PC-9 (cell line): ENCODE measurements at regions of chr10 and their contacts with region 1.

Region 1: GRCh38 chr10:79266543-79267312 is 80.5 kb upstream of the PPIF start:
- DNase-seq: peak in 1 of 2 experiments; percentile 62
- H3K4me3 ChIP-seq: no peak overlapping the region
- H3K27ac ChIP-seq: no peak overlapping the region
- H3K4me1 ChIP-seq: peaks cover 41% of the 10 kb centered on the region
- H3K27me3 ChIP-seq: no peaks in the 10 kb centered on the region
- CTCF ChIP-seq: no peak

Region 2: GRCh38 chr10:77582710-77583115 is 1684.0 kb before region 1 on chr10:
- CTCF ChIA-PET with region 1: no interaction called
- POLR2A ChIA-PET with region 1: interaction called, 12 read pairs
- intact Hi-C with region 1: no loop called
- DNase-seq: peak; percentile 91 to 96
- H3K4me3 ChIP-seq: no peak overlapping the region
- H3K27ac ChIP-seq: peak overlapping the region; percentile 88
- H3K4me1 ChIP-seq: peaks cover 63% of the 10 kb centered on the region
- H3K27me3 ChIP-seq: no peaks in the 10 kb centered on the region
- CTCF ChIP-seq: no peak

Region 3: GRCh38 chr10:79202188-79203013 is 64.3 kb before region 1 on chr10:
- CTCF ChIA-PET with region 1: interaction called, 16 read pairs
- POLR2A ChIA-PET with region 1: no interaction called
- intact Hi-C with region 1: no loop called
- DNase-seq: peak in 1 of 2 experiments; percentile 51
- H3K4me3 ChIP-seq: no peak overlapping the region
- H3K27ac ChIP-seq: no peak overlapping the region
- H3K4me1 ChIP-seq: no peaks in the 10 kb centered on the region
- H3K27me3 ChIP-seq: no peaks in the 10 kb centered on the region
- CTCF ChIP-seq: peak; percentile 70

Region 4: DNA sequence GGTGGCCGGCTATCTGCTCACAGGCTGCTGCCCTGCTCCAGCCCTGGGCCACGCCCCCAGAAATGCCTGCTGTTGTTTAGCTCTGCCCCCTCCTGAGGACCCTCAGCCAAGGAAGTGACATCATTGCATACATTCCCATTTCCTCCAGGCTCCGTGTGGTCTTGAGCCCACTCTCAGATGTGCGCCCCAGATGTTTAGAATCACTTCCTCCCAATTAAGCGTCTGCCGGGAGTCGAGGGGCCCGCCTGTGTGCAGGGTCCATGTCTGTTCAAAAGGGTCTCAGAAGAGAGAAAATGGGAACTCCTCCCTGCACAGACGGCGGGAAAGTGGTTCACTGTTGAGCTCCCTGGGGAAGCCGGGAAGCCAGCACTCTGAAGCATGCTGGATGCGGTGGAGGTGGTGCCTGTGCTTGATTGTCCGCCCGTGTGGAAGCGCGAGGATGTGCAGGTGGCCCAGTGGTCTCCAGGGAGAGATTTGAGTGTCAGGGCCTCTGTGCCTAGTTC is 36.3 kb before region 1 on chr10:
- CTCF ChIA-PET with region 1: no interaction called
- POLR2A ChIA-PET with region 1: no interaction called
- intact Hi-C with region 1: loop called (anchors 5 kb)
- DNase-seq: no peak
- H3K4me3 ChIP-seq: no peak overlapping the region
- H3K27ac ChIP-seq: no peak overlapping the region
- H3K4me1 ChIP-seq: 0 out of 2 replicates have a peak, but pooled peaks cover 9% of the 10 kb centered on the region
- H3K27me3 ChIP-seq: no peaks in the 10 kb centered on the region
- CTCF ChIP-seq: no peak

Region 5: GRCh38 chr10:79242620-79243152 is 24.0 kb before region 1 on chr10:
- CTCF ChIA-PET with region 1: interaction called, 3 read pairs
- POLR2A ChIA-PET with region 1: interaction called, 4 read pairs
- intact Hi-C with region 1: loop called (anchors 2 kb)
- DNase-seq: peak; percentile 62 to 72
- H3K4me3 ChIP-seq: peak overlapping the region; percentile 66
- H3K27ac ChIP-seq: no peak overlapping the region
- H3K4me1 ChIP-seq: peaks cover 32% of the 10 kb centered on the region
- H3K27me3 ChIP-seq: no peaks in the 10 kb centered on the region
- CTCF ChIP-seq: no peak

Region 6: DNA sequence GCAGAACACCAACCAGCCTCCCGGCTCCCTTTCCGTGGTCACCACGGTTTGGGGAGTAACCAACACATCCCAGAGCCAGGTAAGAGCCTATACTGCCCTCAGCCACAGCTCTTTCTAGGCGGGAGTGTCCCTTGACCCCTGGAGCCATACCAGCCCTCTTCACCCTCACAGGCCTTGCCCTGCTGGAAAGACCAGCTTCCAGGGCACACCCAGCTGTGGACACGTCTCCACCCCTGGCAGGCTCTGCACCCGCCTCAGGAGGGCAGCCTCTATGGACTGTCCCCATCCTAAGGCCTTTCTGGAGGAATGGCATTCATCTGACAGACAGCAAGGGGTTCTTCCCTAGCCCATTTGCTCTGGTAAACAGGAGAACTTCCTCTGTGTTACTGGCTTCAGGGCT is 23.1 kb after region 1 on chr10:
- CTCF ChIA-PET with region 1: interaction called, 5 read pairs
- POLR2A ChIA-PET with region 1: no interaction called
- intact Hi-C with region 1: loop called (anchors 2 kb)
- DNase-seq: peak; percentile 66 to 82
- H3K4me3 ChIP-seq: no peak overlapping the region
- H3K27ac ChIP-seq: no peak overlapping the region
- H3K4me1 ChIP-seq: peaks cover 43% of the 10 kb centered on the region
- H3K27me3 ChIP-seq: no peaks in the 10 kb centered on the region
- CTCF ChIP-seq: no peak

Region 7: GRCh38 chr10:79347226-79347893 is 80.6 kb after region 1 on chr10 and contains the start of gene PPIF:
- CTCF ChIA-PET with region 1: interaction called, 11 read pairs
- POLR2A ChIA-PET with region 1: no interaction called
- intact Hi-C with region 1: no loop called
- DNase-seq: peak; percentile 76 to 97
- H3K4me3 ChIP-seq: peak within 1 kb of the TSS; percentile 87
- H3K27ac ChIP-seq: peak within 1 kb of the TSS; percentile 87
- H3K4me1 ChIP-seq: peaks cover 29% of the 10 kb centered on the region
- H3K27me3 ChIP-seq: no peaks in the 10 kb centered on the region
- CTCF ChIP-seq: peak; percentile 98
- total RNA-seq, gene PPIF: 171 and 203 TPM in 2 replicates